Mammary epithelial cell (primary cell): ENCODE measurements at regions of chr1 and their contacts with region 1.

Region 1: GRCh38 chr1:240586006-240586405 is 25.9 kb downstream of the GREM2 start:
- DNase-seq: no peak
- H3K4me3 ChIP-seq: no peak overlapping the region
- H3K27ac ChIP-seq: no peak overlapping the region
- H3K4me1 ChIP-seq: no peaks in the 10 kb centered on the region
- H3K27me3 ChIP-seq: no peaks in the 10 kb centered on the region
- CTCF ChIP-seq: no peak

Region 2: DNA sequence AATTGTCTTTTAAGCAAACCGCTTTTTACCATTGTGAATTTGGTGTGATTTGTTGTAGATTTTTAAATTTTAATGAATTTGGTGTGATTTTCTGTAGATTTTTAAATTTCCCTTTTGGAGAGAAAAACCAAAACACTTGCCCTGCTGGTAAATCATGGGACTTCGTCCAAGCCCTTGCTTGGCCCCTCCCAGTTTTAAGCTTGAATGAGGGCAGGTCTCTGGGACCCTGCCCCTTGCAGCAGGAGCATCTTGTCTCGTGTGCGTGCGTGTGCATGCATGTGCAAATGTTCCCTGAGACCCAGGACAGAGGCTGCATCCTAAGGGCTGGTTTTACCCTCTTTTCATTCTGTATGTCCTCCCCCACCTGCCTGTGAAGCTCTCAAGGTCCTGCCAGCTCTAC is 222.7 kb before region 1 on chr1:
- CTCF ChIA-PET with region 1: no interaction called
- dilution Hi-C with region 1: no loop called
- in situ Hi-C with region 1: no loop called
- intact Hi-C with region 1: no loop called
- DNase-seq: no peak
- H3K4me3 ChIP-seq: no peak overlapping the region
- H3K27ac ChIP-seq: no peak overlapping the region
- H3K4me1 ChIP-seq: no peaks in the 10 kb centered on the region
- H3K27me3 ChIP-seq: no peaks in the 10 kb centered on the region
- CTCF ChIP-seq: no peak

Region 3: DNA sequence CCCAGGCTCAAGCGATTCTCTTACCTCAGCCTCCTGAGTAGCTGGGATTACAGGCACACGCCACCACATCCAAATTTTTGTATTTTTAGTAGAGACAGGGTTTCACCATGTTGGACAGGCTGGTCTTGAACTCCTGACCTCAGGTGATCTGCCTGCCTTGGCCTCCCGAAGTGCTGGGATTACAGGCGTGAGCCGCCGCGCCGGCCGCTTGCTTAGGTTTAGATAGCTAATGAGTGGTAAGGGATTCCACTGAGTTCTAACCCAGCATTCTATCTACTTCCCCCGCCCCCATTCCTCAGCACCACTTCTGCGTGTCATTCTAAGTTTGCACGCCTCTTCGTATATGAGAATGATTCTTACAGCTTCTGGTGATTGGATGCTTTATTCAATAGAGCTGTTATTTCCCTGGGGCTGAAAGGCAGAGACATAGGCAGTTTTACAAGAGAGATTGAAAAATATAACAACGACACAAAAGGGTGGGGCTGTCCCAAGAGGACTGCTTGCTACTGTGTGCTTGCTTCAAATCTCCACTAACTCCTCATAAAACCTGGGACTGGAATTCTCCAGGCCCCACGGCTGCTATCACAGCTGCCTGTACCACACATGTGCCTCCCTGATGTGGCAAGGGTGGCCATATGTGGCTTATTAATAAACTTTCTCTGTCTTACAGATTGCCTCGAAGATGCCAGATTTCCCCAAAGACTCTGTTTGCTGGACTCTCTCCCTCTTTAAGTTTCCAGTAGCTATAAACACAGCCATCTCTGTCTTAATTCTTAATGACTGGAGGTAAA is 49.7 kb after region 1 on chr1:
- CTCF ChIA-PET with region 1: no interaction called
- dilution Hi-C with region 1: no loop called
- in situ Hi-C with region 1: no loop called
- intact Hi-C with region 1: no loop called
- DNase-seq: no peak
- H3K4me3 ChIP-seq: no peak overlapping the region
- H3K27ac ChIP-seq: no peak overlapping the region
- H3K4me1 ChIP-seq: no peaks in the 10 kb centered on the region
- H3K27me3 ChIP-seq: no peaks in the 10 kb centered on the region
- CTCF ChIP-seq: no peak

Region 4: GRCh38 chr1:240663160-240663879 is 77.3 kb after region 1 on chr1:
- CTCF ChIA-PET with region 1: no interaction called
- dilution Hi-C with region 1: loop called (anchors 5 kb)
- in situ Hi-C with region 1: no loop called
- intact Hi-C with region 1: no loop called
- DNase-seq: no peak
- H3K4me3 ChIP-seq: no peak overlapping the region
- H3K27ac ChIP-seq: no peak overlapping the region
- H3K4me1 ChIP-seq: no peaks in the 10 kb centered on the region
- H3K27me3 ChIP-seq: no peaks in the 10 kb centered on the region
- CTCF ChIP-seq: no peak